CD8-positive, alpha-beta T cell (primary cell): ENCODE measurements at regions of chr3 and their contacts with region 1.

Region 1: GRCh38 chr3:101803173-101803782 is 24.3 kb downstream of the NXPE3 start:
- DNase-seq: peak in 7 of 9 experiments; percentile 30 to 87 (median 61)
- ATAC-seq: peak; percentile 100
- H3K4me3 ChIP-seq: no peak overlapping the region
- H3K4me3 Mint-ChIP-seq: peak overlapping the region; percentile 32
- H3K27ac ChIP-seq: no peak overlapping the region
- H3K27ac Mint-ChIP-seq: peak overlapping the region; percentile 75
- H3K4me1 ChIP-seq: no peaks in the 10 kb centered on the region
- H3K4me1 Mint-ChIP-seq: peaks cover 36% of the 10 kb centered on the region
- H3K27me3 ChIP-seq: no peaks in the 10 kb centered on the region
- H3K27me3 Mint-ChIP-seq: no peaks in the 10 kb centered on the region
- CTCF ChIP-seq: peak; percentile 97

Region 2: DNA sequence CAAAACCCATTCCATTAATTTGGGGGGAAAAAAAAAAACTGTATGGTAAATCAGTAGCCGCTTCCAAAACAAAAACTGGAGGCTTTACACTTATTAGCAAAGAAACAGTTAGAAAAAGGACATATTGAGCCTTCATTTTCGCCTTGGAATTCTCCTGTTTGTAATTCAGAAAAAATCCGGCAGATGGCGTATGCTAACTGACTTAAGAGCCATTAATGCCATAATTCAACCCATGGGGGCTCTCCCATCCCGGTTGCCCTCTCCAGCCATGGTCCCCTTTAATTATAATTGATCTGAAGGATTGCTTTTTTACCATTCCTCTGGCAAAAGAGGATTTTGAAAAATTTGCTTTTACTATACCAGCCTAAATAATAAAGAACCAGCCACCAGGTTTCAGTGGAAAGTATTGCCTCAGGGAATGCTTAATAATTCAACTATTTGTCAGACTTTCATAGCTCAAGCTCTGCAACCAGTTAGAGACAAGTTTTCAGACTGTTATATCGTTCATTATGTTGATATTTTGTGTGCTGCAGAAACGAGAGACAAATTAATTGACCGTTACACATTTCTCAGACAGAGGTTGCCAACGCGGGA is 107.4 kb before region 1 on chr3:
- CTCF ChIA-PET with region 1: interaction called, 8 read pairs
- POLR2A ChIA-PET with region 1: interaction called, 4 read pairs
- intact Hi-C with region 1: loop called (anchors 1 to 5 kb)
- DNase-seq: peak in 6 of 9 experiments; percentile 14 to 79 (median 52)
- ATAC-seq: peak; percentile 37
- H3K4me3 ChIP-seq: no peak overlapping the region
- H3K4me3 Mint-ChIP-seq: no peak overlapping the region
- H3K27ac ChIP-seq: no peak overlapping the region
- H3K27ac Mint-ChIP-seq: no peak overlapping the region
- H3K4me1 ChIP-seq: no peaks in the 10 kb centered on the region
- H3K4me1 Mint-ChIP-seq: peaks cover 2% of the 10 kb centered on the region
- H3K27me3 ChIP-seq: no peaks in the 10 kb centered on the region
- H3K27me3 Mint-ChIP-seq: no peaks in the 10 kb centered on the region
- CTCF ChIP-seq: peak; percentile 81

Region 3: DNA sequence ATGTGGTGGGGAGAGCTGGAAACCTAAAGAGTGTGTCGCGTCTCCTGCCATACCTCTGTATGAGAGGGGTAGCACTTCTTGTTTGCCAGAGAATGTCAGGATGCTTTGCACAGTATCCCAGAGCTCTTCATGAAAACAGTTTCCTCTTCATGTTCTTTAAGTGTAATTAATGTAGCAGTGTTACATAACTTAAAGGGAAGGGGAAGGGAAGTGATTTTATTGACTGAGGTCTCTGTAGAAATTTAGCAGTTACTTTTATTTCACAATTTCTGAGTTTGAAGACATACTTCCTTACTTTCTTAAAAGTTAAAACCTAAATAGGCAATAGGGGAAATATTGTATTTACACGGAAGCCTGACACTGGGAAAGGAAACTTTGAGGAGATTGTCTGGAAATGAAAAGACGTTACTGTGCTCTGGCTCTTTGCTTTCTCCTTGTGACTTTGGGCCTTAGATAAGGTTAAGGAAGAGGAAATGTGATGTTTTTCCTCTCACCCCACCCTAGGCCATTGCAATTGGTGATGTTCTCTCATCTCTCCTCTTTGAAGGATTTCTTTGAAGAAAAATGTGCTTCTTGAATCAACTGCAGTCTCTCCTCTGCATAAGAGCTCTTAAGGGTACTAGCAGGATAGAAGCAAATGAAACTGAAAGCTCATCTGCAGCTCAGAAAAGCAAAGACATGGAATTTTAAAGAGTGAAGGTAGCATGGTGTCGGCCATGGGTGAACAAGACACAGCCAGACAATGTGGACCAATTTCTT is 18.2 kb before region 1 on chr3:
- CTCF ChIA-PET with region 1: interaction called, 14 read pairs
- POLR2A ChIA-PET with region 1: interaction called, 9 read pairs
- intact Hi-C with region 1: no loop called
- DNase-seq: peak in 2 of 9 experiments; percentile 24 to 59
- ATAC-seq: peak; percentile 83
- H3K4me3 ChIP-seq: peak overlapping the region; percentile 3 to 38
- H3K4me3 Mint-ChIP-seq: peak overlapping the region; percentile 74
- H3K27ac ChIP-seq: peak overlapping the region; percentile 45 to 62
- H3K27ac Mint-ChIP-seq: peak overlapping the region; percentile 91
- H3K4me1 ChIP-seq: peaks cover 53% of the 10 kb centered on the region
- H3K4me1 Mint-ChIP-seq: peaks cover 75% of the 10 kb centered on the region
- H3K27me3 ChIP-seq: no peaks in the 10 kb centered on the region
- H3K27me3 Mint-ChIP-seq: no peaks in the 10 kb centered on the region
- CTCF ChIP-seq: no peak

Region 4: GRCh38 chr3:101791778-101792177 is 11.5 kb before region 1 on chr3:
- CTCF ChIA-PET with region 1: interaction called, 19 read pairs
- POLR2A ChIA-PET with region 1: no interaction called
- intact Hi-C with region 1: no loop called
- DNase-seq: no peak
- ATAC-seq: no peak
- H3K4me3 ChIP-seq: no peak overlapping the region
- H3K4me3 Mint-ChIP-seq: no peak overlapping the region
- H3K27ac ChIP-seq: no peak overlapping the region
- H3K27ac Mint-ChIP-seq: peak overlapping the region; percentile 37
- H3K4me1 ChIP-seq: peaks cover 16% of the 10 kb centered on the region
- H3K4me1 Mint-ChIP-seq: peaks cover 78% of the 10 kb centered on the region
- H3K27me3 ChIP-seq: no peaks in the 10 kb centered on the region
- H3K27me3 Mint-ChIP-seq: no peaks in the 10 kb centered on the region
- CTCF ChIP-seq: no peak